Activated CD4-positive, alpha-beta memory T cell treated with anti-CD3 and anti-CD28 coated beads, Interleukin-2, amount 10 ng/mL, durations not matched to agents 7 days and 5 days (primary cell): ENCODE measurements at regions of chrX and their contacts with region 1.

Region 1: GRCh38 chrX:154734061-154734781 is 16.7 kb downstream of the GAB3 start:
- DNase-seq: peak; percentile 46
- H3K4me3 Mint-ChIP-seq: peak overlapping the region; percentile 66
- H3K27ac Mint-ChIP-seq: peak overlapping the region; percentile 98
- H3K4me1 Mint-ChIP-seq: peaks cover 98% of the 10 kb centered on the region
- H3K27me3 Mint-ChIP-seq: no peaks in the 10 kb centered on the region

Region 2: DNA sequence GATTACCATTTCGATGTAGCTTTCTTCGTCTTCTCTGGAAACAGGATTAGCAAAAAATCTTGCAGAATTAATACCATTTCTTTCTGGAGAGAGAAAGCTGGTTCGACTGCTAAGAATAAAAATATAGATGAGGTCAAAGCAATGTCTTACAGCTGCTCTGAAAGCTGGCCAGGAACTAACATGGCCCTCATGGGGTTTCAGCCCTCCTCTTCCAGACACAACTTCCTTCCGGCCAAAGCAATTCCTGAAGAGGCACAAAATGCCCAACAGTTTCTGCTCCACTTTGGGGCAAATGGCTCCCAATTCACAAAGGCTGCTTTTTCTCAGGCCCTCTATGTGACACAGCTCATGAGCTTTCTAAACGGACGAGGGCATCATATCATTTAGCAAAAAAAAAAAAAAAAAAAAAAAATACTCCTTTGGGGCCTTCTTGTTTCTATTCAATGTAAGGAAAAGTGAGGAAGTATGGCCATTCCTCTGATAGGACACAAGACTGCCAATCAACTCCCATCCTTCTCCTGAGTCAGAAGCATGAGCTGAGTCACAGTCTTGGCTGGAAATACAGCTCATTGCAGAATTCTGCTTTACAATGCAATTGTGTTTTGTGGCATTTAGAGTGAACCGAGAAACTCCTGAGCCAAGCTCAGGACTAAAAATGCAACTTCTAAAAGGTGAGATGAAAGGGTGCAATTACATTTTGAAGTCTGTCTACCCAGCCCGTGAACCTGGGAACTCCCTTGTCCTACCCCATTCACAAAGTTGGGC is 38.1 kb before region 1 on chrX:
- CTCF ChIA-PET with region 1: no interaction called
- POLR2A ChIA-PET with region 1: no interaction called
- DNase-seq: no peak
- H3K4me3 Mint-ChIP-seq: no peak overlapping the region
- H3K27ac Mint-ChIP-seq: no peak overlapping the region
- H3K4me1 Mint-ChIP-seq: peaks cover 18% of the 10 kb centered on the region
- H3K27me3 Mint-ChIP-seq: no peaks in the 10 kb centered on the region

Region 3: GRCh38 chrX:154719132-154719675 is 15.0 kb before region 1 on chrX:
- CTCF ChIA-PET with region 1: interaction called, 23 read pairs
- POLR2A ChIA-PET with region 1: interaction called, 13 read pairs
- DNase-seq: peak; percentile 61
- H3K4me3 Mint-ChIP-seq: no peak overlapping the region
- H3K27ac Mint-ChIP-seq: peak overlapping the region; percentile 85
- H3K4me1 Mint-ChIP-seq: peaks cover 80% of the 10 kb centered on the region
- H3K27me3 Mint-ChIP-seq: no peaks in the 10 kb centered on the region